Endothelial cell of umbilical vein (primary cell): ENCODE measurements at regions of chr9 and their contacts with region 1.

Region 1: GRCh38 chr9:14372437-14373335 is 58.7 kb upstream of the NFIB start:
- DNase-seq: peak; percentile 98
- H3K4me3 ChIP-seq: peak overlapping the region in 1 of 3 experiments; percentile 29
- H3K27ac ChIP-seq: peak overlapping the region; percentile 96
- H3K4me1 ChIP-seq: peaks cover 36% of the 10 kb centered on the region
- H3K27me3 ChIP-seq: no peaks in the 10 kb centered on the region
- CTCF ChIP-seq: no peak
- POLR2A ChIP-seq: peak; percentile 70

Region 2: DNA sequence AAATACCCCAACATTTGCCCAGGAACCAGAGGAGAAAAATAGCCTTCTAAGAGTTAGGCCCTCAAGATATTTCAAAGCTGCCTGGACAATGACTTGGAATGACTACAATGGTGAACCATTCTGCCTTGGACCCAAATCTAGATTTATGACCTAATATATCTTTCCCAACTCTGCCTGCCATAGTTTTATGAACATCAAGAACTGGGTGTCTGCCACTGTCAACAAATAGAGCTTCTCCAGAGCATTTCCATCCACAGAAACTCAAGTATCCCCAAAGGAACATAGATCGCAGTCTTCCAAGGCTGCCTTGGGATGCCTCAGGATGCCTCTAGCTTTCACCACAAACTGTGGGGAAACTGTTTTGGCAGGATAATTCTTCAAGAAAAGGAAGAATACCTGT is 10.5 kb before region 1 on chr9:
- CTCF ChIA-PET with region 1: interaction called, 60 read pairs
- POLR2A ChIA-PET with region 1: no interaction called
- dilution Hi-C with region 1: no loop called
- intact Hi-C with region 1: no loop called
- DNase-seq: no peak
- H3K4me3 ChIP-seq: no peak overlapping the region
- H3K27ac ChIP-seq: no peak overlapping the region
- H3K4me1 ChIP-seq: peaks cover 3% of the 10 kb centered on the region
- H3K27me3 ChIP-seq: no peaks in the 10 kb centered on the region
- CTCF ChIP-seq: no peak
- POLR2A ChIP-seq: no peak

Region 3: GRCh38 chr9:14391620-14392019 is 18.9 kb after region 1 on chr9:
- CTCF ChIA-PET with region 1: no interaction called
- POLR2A ChIA-PET with region 1: no interaction called
- dilution Hi-C with region 1: no loop called
- intact Hi-C with region 1: no loop called
- DNase-seq: no peak
- H3K4me3 ChIP-seq: no peak overlapping the region
- H3K27ac ChIP-seq: no peak overlapping the region
- H3K4me1 ChIP-seq: no peaks in the 10 kb centered on the region
- H3K27me3 ChIP-seq: no peaks in the 10 kb centered on the region
- CTCF ChIP-seq: no peak
- POLR2A ChIP-seq: no peak

Region 4: GRCh38 chr9:14428781-14429230 is 56.1 kb after region 1 on chr9:
- CTCF ChIA-PET with region 1: interaction called, 6 read pairs
- POLR2A ChIA-PET with region 1: no interaction called
- dilution Hi-C with region 1: no loop called
- intact Hi-C with region 1: loop called (anchors 5 kb)
- DNase-seq: peak; percentile 68
- H3K4me3 ChIP-seq: no peak overlapping the region
- H3K27ac ChIP-seq: no peak overlapping the region
- H3K4me1 ChIP-seq: peaks cover 15% of the 10 kb centered on the region
- H3K27me3 ChIP-seq: no peaks in the 10 kb centered on the region
- CTCF ChIP-seq: peak; percentile 79 to 84
- POLR2A ChIP-seq: no peak

Region 5: GRCh38 chr9:14633906-14634565 is 261.4 kb after region 1 on chr9:
- CTCF ChIA-PET with region 1: no interaction called
- POLR2A ChIA-PET with region 1: no interaction called
- dilution Hi-C with region 1: no loop called
- intact Hi-C with region 1: no loop called
- DNase-seq: no peak
- H3K4me3 ChIP-seq: no peak overlapping the region
- H3K27ac ChIP-seq: no peak overlapping the region
- H3K4me1 ChIP-seq: no peaks in the 10 kb centered on the region
- H3K27me3 ChIP-seq: no peaks in the 10 kb centered on the region
- CTCF ChIP-seq: no peak
- POLR2A ChIP-seq: no peak